Transverse colon (tissue), 4 donors: ENCODE measurements at regions of chr6 and their contacts with region 1.

Region 1: GRCh38 chr6:41683510-41684310 is 45.4 kb downstream of the MDFI start:
- DNase-seq: peak; percentile 82
- H3K4me3 ChIP-seq: peak overlapping the region; percentile 23 to 43 (median 34)
- H3K27ac ChIP-seq: peak overlapping the region in 3 of 4 donors; percentile 61 to 68 (median 67)
- H3K4me1 ChIP-seq: peaks cover 5 to 25% (median 20%) of the 10 kb centered on the region in 4 donors
- H3K27me3 ChIP-seq: no peaks in the 10 kb centered on the region
- CTCF ChIP-seq: peak; percentile 88 to 91 (median 90)
- EP300 ChIP-seq: no peak
- POLR2A ChIP-seq: no peak

Region 2: GRCh38 chr6:41367700-41368099 is 316.0 kb before region 1 on chr6:
- in situ Hi-C with region 1: loop called in 3 of 4 experiments (anchors 10 to 25 kb)
- intact Hi-C with region 1: loop called (anchors 2 kb)
- DNase-seq: peak; percentile 33
- H3K4me3 ChIP-seq: no peak overlapping the region
- H3K27ac ChIP-seq: no peak overlapping the region
- H3K4me1 ChIP-seq: peaks cover 6 to 20% (median 18%) of the 10 kb centered on the region in 4 donors
- H3K27me3 ChIP-seq: peaks cover 84% of the 10 kb centered on the region
- CTCF ChIP-seq: peak; percentile 23 to 52 (median 45)
- EP300 ChIP-seq: no peak
- POLR2A ChIP-seq: no peak

Region 3: DNA sequence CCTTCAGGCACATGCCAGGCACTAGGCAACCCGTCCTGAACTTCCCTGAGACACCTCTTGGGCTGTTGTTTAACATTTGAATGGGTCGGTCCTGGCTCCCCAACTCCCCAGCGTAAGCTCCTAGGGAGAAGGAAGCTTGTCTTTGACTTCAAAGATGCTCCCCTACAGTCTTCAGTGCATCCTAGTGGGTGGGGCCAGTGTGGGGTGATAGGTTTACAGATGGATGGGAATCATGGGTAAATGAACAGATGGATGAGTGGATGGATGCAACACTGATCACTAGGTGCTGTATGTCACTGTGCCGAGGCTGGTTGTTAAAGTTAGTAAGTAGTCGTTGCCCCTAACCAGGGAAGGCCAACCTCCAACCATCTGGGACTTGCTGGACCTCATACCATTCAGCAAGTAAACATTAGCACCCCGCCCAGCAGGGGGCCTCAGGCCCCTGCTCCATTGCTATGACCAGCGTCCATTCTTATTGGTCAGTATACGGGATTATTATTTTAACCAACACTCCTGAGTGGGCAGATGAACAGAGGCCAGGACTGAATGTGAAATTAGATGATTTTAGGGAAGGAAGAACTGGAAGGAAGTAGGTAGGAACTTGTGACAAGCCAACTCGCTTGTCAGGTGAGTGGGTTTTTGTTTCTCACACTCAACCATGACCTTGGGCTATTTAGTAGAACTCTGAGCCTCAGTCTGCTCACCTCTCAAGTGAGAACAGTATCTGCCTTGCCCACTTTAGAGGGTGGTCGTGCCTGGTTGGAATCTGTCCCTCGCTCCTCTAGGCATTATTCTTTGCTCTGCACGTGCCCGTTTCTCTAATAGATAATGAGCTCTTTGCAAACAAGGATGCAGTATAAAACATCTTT is 220.4 kb before region 1 on chr6:
- in situ Hi-C with region 1: loop called in 1 of 4 experiments (anchors 25 kb)
- intact Hi-C with region 1: loop called (anchors 10 kb)
- DNase-seq: peak; percentile 64
- H3K4me3 ChIP-seq: no peak overlapping the region
- H3K27ac ChIP-seq: no peak overlapping the region
- H3K4me1 ChIP-seq: no peaks in the 10 kb centered on the region
- H3K27me3 ChIP-seq: no peaks in the 10 kb centered on the region
- CTCF ChIP-seq: peak; percentile 49 to 63 (median 51)
- EP300 ChIP-seq: no peak
- POLR2A ChIP-seq: no peak

Region 4: DNA sequence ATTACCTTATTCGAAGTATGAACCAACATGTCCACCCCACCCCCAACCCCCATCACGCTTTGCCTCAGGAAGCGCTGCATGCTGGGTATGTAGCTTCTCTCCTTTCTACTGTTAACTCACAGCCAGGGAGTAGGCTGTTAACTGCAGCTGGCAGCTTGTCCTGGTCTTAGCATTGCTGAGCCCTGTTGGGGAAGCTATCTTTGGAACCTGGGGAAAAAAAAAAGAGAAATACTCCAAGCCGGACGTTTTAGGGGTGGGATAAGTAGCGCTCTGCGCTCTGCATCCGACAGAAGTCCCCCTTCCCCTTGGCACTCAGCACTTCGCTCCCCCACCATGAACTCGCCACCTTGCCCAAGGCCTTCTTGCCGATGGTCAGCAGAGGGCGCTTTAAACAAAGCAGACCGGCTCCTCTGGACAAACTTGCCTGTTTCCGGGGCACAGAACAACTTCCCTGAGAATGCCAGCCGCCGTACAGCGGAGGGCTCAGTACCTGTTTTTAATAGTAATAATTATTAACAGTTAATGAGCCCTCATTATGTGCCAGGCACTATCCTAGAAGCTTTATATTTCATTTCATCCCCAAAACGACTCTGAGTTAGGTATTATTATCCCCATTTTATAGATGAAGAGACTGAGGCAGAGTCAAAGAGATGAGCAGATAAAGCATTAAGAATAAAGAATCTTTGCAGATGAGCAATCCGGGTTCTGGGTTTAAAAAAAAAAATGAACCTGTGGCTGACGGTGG is 80.7 kb before region 1 on chr6:
- in situ Hi-C with region 1: loop called in 3 of 4 experiments (anchors 5 to 10 kb)
- intact Hi-C with region 1: loop called (anchors 1 kb)
- DNase-seq: peak; percentile 84
- H3K4me3 ChIP-seq: peak overlapping the region in 1 of 4 donors; percentile 25
- H3K27ac ChIP-seq: peak overlapping the region in 3 of 4 donors; percentile 49 to 75 (median 60)
- H3K4me1 ChIP-seq: peaks cover 16 to 20% (median 18%) of the 10 kb centered on the region in 4 donors
- H3K27me3 ChIP-seq: no peaks in the 10 kb centered on the region
- CTCF ChIP-seq: peak; percentile 86 to 92 (median 88)
- EP300 ChIP-seq: no peak
- POLR2A ChIP-seq: no peak

Region 5: DNA sequence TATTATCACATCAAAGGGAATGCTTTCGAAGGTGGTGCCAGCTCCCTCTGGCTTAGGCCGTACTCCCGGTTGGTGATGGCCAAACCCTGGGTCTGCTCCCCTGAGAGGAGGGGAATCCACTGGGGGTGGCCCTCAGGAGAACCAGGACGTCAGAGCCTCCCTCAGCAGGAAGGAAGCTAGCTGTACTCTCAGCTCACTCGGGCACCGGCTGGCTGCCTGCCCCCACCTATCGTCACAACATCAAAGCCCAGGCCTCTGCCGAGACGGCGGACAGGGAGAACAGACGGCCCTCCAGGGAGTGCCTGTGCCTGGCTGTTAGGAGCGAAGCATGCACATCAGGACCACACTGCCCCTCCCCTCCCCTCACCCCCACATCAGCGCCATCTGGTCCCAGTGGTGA is 72.6 kb after region 1 on chr6:
- in situ Hi-C with region 1: no loop called
- intact Hi-C with region 1: no loop called
- DNase-seq: no peak
- H3K4me3 ChIP-seq: no peak overlapping the region
- H3K27ac ChIP-seq: no peak overlapping the region
- H3K4me1 ChIP-seq: no peaks in the 10 kb centered on the region
- H3K27me3 ChIP-seq: no peaks in the 10 kb centered on the region
- CTCF ChIP-seq: no peak
- EP300 ChIP-seq: no peak
- POLR2A ChIP-seq: no peak